ENCODE measurements at regions of chr14 and their contacts with region 1.

Region 1: GRCh38 chr14:59055439-59056045 is 132.9 kb upstream of the DAAM1 start:
- DNase-seq: no peak
- ATAC-seq: no peak
- H3K4me3 Mint-ChIP-seq: no peak overlapping the region
- H3K27ac Mint-ChIP-seq: no peak overlapping the region
- H3K4me1 Mint-ChIP-seq: no peaks in the 10 kb centered on the region
- H3K27me3 Mint-ChIP-seq: peaks cover 5% of the 10 kb centered on the region
- CTCF ChIP-seq: no peak

Region 2: DNA sequence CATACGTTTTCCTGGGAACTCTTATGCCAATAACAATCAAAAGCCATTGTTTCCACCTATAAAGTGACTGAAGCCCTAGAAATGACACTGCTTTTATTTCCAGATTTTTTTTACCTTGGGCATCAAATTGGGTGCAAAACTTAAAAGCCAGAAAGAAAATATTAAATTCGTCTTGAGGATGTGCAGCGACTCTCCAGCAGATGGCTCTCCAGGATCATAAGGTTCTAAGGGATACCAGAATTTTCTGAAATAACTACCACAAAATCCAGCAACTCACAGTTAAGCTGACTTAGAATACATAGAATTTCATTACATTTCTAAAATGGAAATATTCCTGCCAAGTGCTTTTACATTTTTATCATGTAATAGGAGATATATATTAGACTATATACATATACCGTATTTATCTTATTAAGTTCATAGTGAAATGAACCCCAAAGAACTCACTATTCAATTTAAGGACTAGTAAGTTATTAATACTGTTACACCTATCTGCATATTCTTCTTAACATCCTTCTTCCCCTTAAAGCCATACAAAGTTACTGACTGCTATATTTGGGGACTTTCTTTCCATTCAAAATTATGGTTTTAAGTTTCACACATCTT is 947.5 kb before region 1 on chr14:
- CTCF ChIA-PET with region 1: no interaction called
- POLR2A ChIA-PET with region 1: no interaction called
- intact Hi-C with region 1: loop called (anchors 2 kb)
- DNase-seq: no peak
- ATAC-seq: no peak
- H3K4me3 Mint-ChIP-seq: no peak overlapping the region
- H3K27ac Mint-ChIP-seq: no peak overlapping the region
- H3K4me1 Mint-ChIP-seq: no peaks in the 10 kb centered on the region
- H3K27me3 Mint-ChIP-seq: peaks cover 4% of the 10 kb centered on the region
- CTCF ChIP-seq: no peak